Activated CD4-positive, alpha-beta T cell treated with anti-CD3 and anti-CD28 coated beads for 36 hours (primary cell): ENCODE measurements at regions of chr12 and their contacts with region 1.

Region 1: GRCh38 chr12:110280779-110281548 is at the start of gene ATP2A2:
- DNase-seq: peak; percentile 94
- ATAC-seq: peak; percentile 87
- H3K4me3 Mint-ChIP-seq: peak within 1 kb of the TSS; percentile 85
- H3K27ac Mint-ChIP-seq: peak within 1 kb of the TSS; percentile 86
- H3K4me1 Mint-ChIP-seq: peaks cover 40% of the 10 kb centered on the region
- H3K27me3 Mint-ChIP-seq: peaks cover 3% of the 10 kb centered on the region
- total RNA-seq, gene ATP2A2: 116 to 130 TPM

Region 2: GRCh38 chr12:109477185-109477962 is 803.6 kb before region 1 on chr12 and contains the starts of genes KCTD10 and UBE3B:
- CTCF ChIA-PET with region 1: no interaction called
- POLR2A ChIA-PET with region 1: no interaction called
- intact Hi-C with region 1: loop called in 1 of 2 experiments (anchors 5 kb)
- DNase-seq: peak; percentile 92
- ATAC-seq: peak; percentile 97
- H3K4me3 Mint-ChIP-seq: peak within 1 kb of the TSS; percentile 95
- H3K27ac Mint-ChIP-seq: peak within 1 kb of the TSS; percentile 99
- H3K4me1 Mint-ChIP-seq: peaks cover 43% of the 10 kb centered on the region
- H3K27me3 Mint-ChIP-seq: no peaks in the 10 kb centered on the region
- total RNA-seq, gene KCTD10: 42.0 to 46.3 TPM
- total RNA-seq, gene UBE3B: 25.7 to 27.2 TPM

Region 3: DNA sequence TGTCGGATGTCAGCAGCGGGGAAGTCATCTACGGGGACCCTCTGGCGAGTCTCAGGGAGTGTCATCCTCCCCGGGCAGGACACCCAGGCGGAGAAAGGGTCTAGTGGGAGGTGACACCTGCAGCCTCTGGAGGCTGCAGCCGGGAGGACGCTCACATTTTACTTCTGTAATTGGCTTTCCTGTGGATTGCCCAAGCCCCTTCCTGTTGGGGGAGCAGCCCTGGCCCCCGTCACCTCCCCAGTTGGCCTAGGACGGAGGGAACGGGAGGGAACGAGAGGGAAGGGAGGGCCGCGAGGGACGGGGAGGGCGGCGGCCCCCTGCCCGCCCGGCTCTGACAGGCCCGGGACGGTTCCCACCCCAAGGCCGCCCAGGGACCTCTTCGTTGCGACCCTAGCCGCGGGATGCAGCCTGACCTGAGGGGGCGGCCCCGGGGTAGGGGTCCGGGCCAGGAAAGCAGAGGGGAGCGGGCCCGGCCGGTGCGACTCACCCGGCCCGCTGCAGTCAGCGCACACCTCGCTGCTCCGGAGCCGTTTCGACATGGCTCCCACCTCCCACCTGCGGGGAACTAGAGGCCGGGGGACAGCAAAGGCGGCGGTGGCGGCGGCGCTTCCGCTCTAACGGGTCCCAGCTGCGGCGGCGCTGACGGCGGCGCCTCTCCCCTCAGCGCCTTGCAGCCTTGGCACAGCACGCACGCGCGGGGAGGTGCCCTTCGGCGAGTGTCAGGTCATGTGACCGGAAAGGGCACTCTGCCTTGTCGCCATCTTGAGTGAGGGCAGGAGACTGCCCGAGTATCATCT is 285.1 kb before region 1 on chr12 and contains the start of gene GIT2:
- CTCF ChIA-PET with region 1: no interaction called
- POLR2A ChIA-PET with region 1: interaction called, 4 read pairs
- intact Hi-C with region 1: loop called in 1 of 2 experiments (anchors 5 kb)
- DNase-seq: peak; percentile 98
- ATAC-seq: peak; percentile 85
- H3K4me3 Mint-ChIP-seq: peak within 1 kb of the TSS; percentile 99
- H3K27ac Mint-ChIP-seq: peak within 1 kb of the TSS; percentile 97
- H3K4me1 Mint-ChIP-seq: peaks cover 65% of the 10 kb centered on the region
- H3K27me3 Mint-ChIP-seq: no peaks in the 10 kb centered on the region
- total RNA-seq, gene GIT2: 50.2 to 58.2 TPM

Region 4: GRCh38 chr12:110314308-110314707 is 33.3 kb after region 1 on chr12:
- CTCF ChIA-PET with region 1: no interaction called
- POLR2A ChIA-PET with region 1: no interaction called
- intact Hi-C with region 1: loop called in 1 of 2 experiments (anchors 2 kb)
- DNase-seq: no peak
- ATAC-seq: peak; percentile 59
- H3K4me3 Mint-ChIP-seq: no peak overlapping the region
- H3K27ac Mint-ChIP-seq: peak overlapping the region; percentile 59
- H3K4me1 Mint-ChIP-seq: peaks cover 54% of the 10 kb centered on the region
- H3K27me3 Mint-ChIP-seq: no peaks in the 10 kb centered on the region

Region 5: GRCh38 chr12:110468212-110469048 is 187.5 kb after region 1 on chr12 and contains the starts of genes FAM216A and GPN3:
- CTCF ChIA-PET with region 1: no interaction called
- POLR2A ChIA-PET with region 1: interaction called, 6 read pairs
- intact Hi-C with region 1: loop called (anchors 1 to 2 kb)
- DNase-seq: peak; percentile 97
- ATAC-seq: peak; percentile 78
- H3K4me3 Mint-ChIP-seq: peak within 1 kb of the TSS; percentile 89
- H3K27ac Mint-ChIP-seq: peak within 1 kb of the TSS; percentile 98
- H3K4me1 Mint-ChIP-seq: peaks cover 33% of the 10 kb centered on the region
- H3K27me3 Mint-ChIP-seq: no peaks in the 10 kb centered on the region
- total RNA-seq, gene FAM216A: 55.2 to 57.5 TPM
- total RNA-seq, gene GPN3: 37.8 to 62.0 TPM

Region 6: GRCh38 chr12:110742718-110743570 is 462.0 kb after region 1 on chr12 and contains the start of gene PPP1CC:
- CTCF ChIA-PET with region 1: no interaction called
- POLR2A ChIA-PET with region 1: interaction called, 4 read pairs
- intact Hi-C with region 1: loop called in 1 of 2 experiments (anchors 5 kb)
- DNase-seq: peak; percentile 95
- ATAC-seq: peak; percentile 85
- H3K4me3 Mint-ChIP-seq: peak within 1 kb of the TSS; percentile 98
- H3K27ac Mint-ChIP-seq: peak within 1 kb of the TSS; percentile 99
- H3K4me1 Mint-ChIP-seq: peaks cover 34% of the 10 kb centered on the region
- H3K27me3 Mint-ChIP-seq: no peaks in the 10 kb centered on the region
- total RNA-seq, gene PPP1CC: 201 to 283 TPM